ENCODE measurements at regions of chr19 and their contacts with region 1.

Region 1: GRCh38 chr19:49546825-49547565 is 19.2 kb downstream of the RCN3 start:
- DNase-seq: peak; percentile 62
- ATAC-seq: peak; percentile 93 to 97
- H3K4me3 ChIP-seq: peak overlapping the region in 2 of 4 donors; percentile 12 to 30
- H3K27ac ChIP-seq: peak overlapping the region in 1 of 4 donors; percentile 18
- H3K4me1 ChIP-seq: peaks cover 0 to 5% of the 10 kb centered on the region in 2 donors
- H3K27me3 ChIP-seq: no peaks in the 10 kb centered on the region
- CTCF ChIP-seq: peak; percentile 78 to 89 (median 88)
- POLR2A ChIP-seq: no peak

Region 2: DNA sequence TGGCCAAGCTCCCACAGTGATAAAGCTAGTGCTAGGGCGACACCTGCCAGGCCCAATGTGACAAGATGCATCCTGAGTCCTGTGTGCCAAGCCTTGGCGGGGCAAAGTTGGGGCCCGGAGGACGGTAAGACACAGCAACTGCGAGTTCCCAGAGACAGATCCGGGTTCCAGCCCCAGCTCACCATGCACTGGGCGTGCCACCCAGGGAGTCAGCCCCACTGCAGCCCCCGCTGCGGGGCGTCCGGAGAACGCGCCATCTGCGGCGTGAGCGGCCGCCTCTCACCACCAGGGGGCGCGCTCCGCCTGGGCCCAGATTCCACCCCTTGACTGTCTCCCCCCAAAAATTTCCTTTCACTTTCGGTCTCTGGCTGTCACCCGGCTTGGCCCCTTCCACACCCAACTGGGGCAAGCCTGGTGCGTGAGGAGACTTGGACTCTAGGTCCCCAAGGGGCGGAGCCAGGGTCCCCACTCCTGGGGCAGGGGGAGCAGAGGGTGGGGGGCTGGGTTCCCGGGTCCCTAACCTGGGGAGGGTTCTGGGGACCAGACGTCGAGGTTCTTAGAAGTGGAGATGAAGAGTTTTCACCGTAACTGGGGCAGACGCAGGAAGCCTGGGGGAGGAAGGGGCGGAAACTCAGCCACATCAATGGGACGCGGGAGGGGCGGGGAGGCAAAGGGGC is 73.0 kb before region 1 on chr19 and contains the start of gene FLT3LG:
- in situ Hi-C with region 1: no loop called
- intact Hi-C with region 1: loop called (anchors 1 kb)
- DNase-seq: peak; percentile 41 to 69
- ATAC-seq: peak; percentile 72 to 85
- H3K4me3 ChIP-seq: peak within 1 kb of the TSS; percentile 68 to 84 (median 75)
- H3K27ac ChIP-seq: peak within 1 kb of the TSS; percentile 65 to 87 (median 82)
- H3K4me1 ChIP-seq: peaks cover 0 to 7% of the 10 kb centered on the region in 2 donors
- H3K27me3 ChIP-seq: no peaks in the 10 kb centered on the region
- CTCF ChIP-seq: peak; percentile 90 to 100 (median 98)
- POLR2A ChIP-seq: no peak
- total RNA-seq, gene FLT3LG: 0.91 to 2.7 (median 1.2) TPM

Region 3: GRCh38 chr19:49506575-49507105 is 40.4 kb before region 1 on chr19:
- in situ Hi-C with region 1: loop called in 3 of 4 experiments (anchors 5 kb)
- intact Hi-C with region 1: loop called (anchors 1 kb)
- DNase-seq: peak in 1 of 2 donors; percentile 50
- ATAC-seq: peak; percentile 25 to 71
- H3K4me3 ChIP-seq: no peak overlapping the region
- H3K27ac ChIP-seq: no peak overlapping the region
- H3K4me1 ChIP-seq: peaks cover 5 to 7% of the 10 kb centered on the region in 2 donors
- H3K27me3 ChIP-seq: no peaks in the 10 kb centered on the region
- CTCF ChIP-seq: peak; percentile 72 to 93 (median 81)
- POLR2A ChIP-seq: no peak